Activated T-helper 1 cell treated with anti-CD3 and anti-CD28 coated beads, Interleukin-12 subunit alpha, Interleukin-12 subunit beta, Interleukin-2, Interleukin-4 antibody, amounts not matched to agents 30 ng/mL and 10 ng/mL and 1 ng/mL, durations not matched to agents 14 hours and 24 hours and 36 hours (primary cell): ENCODE measurements at regions of chr21 and their contacts with region 1.

Region 1: GRCh38 chr21:25734904-25735645 is at the starts of genes ATP5PF and GABPA:
- DNase-seq: peak; percentile 96
- H3K4me3 Mint-ChIP-seq: peak within 1 kb of the TSS; percentile 97
- H3K27ac Mint-ChIP-seq: peak within 1 kb of the TSS; percentile 100
- H3K4me1 Mint-ChIP-seq: peaks cover 41% of the 10 kb centered on the region
- H3K27me3 Mint-ChIP-seq: no peaks in the 10 kb centered on the region
- total RNA-seq, gene ATP5PF: 152 and 161 TPM in 2 replicates
- total RNA-seq, gene GABPA: 26.7 and 26.9 TPM in 2 replicates

Region 2: DNA sequence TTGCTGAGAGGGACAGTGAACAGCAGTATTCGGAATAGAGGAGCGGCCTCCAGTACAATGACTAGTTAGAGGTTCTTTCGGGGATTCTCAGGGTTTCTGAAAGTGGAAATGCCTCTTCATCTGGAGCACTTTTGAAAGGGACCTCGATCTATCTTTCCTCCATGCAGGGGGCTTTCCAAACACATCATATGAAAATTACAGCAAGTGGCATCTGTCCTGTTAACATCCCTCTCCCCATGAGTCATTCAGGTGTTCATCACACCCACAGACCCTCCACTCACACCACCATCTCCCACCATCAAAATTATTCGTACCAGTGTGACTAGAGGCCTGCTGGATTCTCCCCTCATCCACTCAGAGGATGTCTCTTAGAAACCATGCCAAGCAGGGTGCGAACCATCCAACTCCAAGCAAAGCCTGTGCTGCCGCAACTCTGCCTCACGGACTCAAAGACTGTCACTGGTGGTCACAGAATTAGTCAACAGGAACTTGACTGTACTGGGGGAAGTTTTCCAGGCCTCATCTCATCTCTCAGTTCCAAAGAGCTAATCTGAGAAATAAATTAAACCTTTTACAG is 338.9 kb before region 1 on chr21:
- intact Hi-C with region 1: loop called (anchors 1 kb)
- DNase-seq: peak; percentile 58
- H3K4me3 Mint-ChIP-seq: peak overlapping the region; percentile 35
- H3K27ac Mint-ChIP-seq: peak overlapping the region; percentile 78
- H3K4me1 Mint-ChIP-seq: peaks cover 13% of the 10 kb centered on the region
- H3K27me3 Mint-ChIP-seq: no peaks in the 10 kb centered on the region

Region 3: DNA sequence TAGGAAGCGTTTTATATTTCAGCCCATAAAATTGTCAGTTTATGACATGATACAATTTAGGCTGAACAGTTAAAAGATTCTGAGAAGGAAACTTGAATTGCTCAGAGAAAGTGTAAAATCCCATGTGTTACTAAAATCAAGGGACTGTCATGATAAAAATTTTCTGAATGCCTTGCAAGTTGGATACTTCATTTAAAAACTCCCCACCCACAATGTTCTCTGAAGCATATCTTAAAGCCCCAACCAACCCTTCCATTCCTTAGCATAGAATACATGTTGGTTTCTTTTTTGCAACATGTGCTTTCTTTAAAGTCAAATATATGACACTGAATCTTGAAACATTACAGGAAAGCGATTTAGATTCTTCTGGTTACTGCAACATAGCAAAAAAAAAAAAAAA is 225.2 kb before region 1 on chr21:
- intact Hi-C with region 1: loop called (anchors 1 kb)
- DNase-seq: no peak
- H3K4me3 Mint-ChIP-seq: no peak overlapping the region
- H3K27ac Mint-ChIP-seq: peak overlapping the region; percentile 13
- H3K4me1 Mint-ChIP-seq: peaks cover 42% of the 10 kb centered on the region
- H3K27me3 Mint-ChIP-seq: no peaks in the 10 kb centered on the region

Region 4: DNA sequence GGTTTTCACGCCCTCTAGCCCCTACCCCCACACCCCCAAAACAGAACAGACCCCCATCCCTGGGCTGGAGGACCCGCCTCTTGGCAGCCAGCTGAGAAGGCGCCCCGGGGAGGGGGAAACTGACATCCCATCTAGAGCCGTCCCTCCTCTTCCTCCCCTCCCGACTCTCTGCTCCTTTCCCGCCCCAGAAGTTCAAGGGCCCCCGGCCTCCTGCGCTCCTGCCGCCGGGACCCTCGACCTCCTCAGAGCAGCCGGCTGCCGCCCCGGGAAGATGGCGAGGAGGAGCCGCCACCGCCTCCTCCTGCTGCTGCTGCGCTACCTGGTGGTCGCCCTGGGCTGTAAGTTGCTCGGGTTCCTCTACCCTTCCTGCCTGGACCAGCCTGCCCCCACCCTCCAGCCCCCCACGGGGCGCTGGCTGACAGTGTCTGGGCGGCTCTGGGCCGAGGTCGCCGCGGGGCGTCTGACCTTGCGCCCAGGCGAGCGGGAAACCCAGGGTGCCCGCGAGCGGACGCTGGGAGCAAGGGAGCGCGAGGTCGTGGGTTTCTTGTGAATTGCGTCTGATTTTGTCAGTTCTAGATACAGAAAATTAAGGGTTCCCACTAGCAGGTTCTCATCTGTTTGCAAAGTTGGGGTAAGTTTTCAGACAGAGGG is 95.4 kb before region 1 on chr21:
- intact Hi-C with region 1: loop called (anchors 1 kb)
- DNase-seq: peak; percentile 10
- H3K4me3 Mint-ChIP-seq: peak overlapping the region; percentile 77
- H3K27ac Mint-ChIP-seq: no peak overlapping the region
- H3K4me1 Mint-ChIP-seq: peaks cover 32% of the 10 kb centered on the region
- H3K27me3 Mint-ChIP-seq: peaks cover 27% of the 10 kb centered on the region

Region 5: DNA sequence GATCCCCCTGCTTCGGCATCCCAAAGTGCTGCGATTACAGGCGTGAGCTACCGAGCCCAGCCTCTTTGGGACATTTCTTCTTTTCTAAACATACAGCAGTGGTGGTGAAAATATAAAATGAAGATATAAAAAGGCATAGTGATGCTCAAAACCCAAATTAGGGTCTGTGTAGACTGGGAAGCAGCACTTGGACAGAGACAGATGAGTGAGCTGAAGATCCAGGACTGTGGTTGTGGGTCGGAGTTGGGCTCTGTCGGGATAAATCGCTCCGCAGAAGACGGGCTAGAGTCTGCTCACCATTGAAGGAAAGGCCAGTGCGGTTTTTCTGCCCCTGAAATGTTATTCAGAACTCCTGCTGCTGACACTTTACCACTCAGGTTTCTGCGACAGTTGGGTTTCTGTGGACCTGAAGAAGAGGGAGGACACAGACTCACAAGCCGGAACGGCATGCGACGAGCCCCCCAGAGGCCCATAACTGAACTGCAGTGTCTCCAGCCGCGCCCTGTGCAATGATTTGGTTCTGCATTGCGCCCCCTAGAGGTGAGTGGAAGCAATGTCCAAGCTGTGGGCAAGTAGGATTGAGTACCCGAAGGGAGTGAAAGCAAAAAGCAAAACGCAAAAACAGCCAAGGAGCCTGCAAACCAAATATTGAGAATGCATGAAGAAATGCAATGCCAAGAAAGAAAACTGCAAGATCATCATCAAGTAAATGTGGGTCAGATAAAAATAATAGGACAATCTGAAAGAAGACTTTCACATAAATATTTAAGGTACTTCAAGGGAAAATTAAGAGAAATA is 66.3 kb after region 1 on chr21:
- intact Hi-C with region 1: loop called (anchors 1 kb)
- DNase-seq: peak; percentile 85
- H3K4me3 Mint-ChIP-seq: no peak overlapping the region
- H3K27ac Mint-ChIP-seq: no peak overlapping the region
- H3K4me1 Mint-ChIP-seq: peaks cover 7% of the 10 kb centered on the region
- H3K27me3 Mint-ChIP-seq: peaks cover 14% of the 10 kb centered on the region